Posterior cingulate gyrus (tissue), 11 donors: ENCODE measurements at regions of chr10 and their contacts with region 1.

Region 1: GRCh38 chr10:70478191-70479164 is at the start of gene PALD1:
- DNase-seq: peak in 8 of 10 donors; percentile 24 to 92 (median 48)

Region 2: DNA sequence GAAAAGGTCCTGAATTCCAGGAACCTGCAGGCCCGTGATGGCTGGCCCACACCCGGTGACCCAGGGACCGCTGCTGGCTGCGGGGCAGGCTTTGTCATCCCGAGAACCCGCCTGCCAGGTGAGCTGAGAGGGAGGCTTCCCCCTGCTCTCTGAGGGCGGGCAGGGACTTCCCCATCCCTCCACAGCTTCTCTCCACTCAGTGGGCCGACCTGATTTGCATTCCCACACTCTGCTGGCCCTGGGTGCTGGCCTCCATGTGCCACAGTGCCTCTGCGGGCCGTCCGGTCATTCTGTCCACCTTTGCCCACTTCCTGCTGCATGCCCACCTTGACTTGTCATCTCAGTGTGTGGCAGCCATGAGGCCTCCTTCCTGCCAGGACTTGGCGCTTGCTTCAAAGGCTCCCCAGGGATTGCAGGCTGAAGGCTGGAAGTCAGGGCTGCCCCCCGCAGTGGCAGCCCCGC is 35.4 kb after region 1 on chr10:
- intact Hi-C with region 1: loop called (anchors 5 kb)
- DNase-seq: no peak

Region 3: DNA sequence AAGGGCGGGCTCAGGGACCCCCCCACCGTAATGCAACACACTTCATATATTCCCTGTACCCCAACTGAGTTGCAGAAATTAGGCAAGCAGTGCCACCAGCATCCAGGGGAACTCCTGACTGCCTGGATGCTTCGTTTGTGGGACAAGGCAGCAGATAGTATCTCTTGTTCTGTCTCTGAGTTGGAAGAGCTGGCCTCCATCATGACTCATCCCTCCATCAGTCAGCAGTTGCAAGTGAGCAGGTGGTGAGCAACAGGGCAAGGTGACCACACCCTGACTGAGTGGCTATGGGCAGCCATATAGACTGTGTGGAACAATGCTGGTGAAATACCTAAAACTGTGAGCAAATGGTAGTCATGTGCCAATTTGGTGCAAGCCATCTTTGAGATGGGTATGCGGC is 171.0 kb after region 1 on chr10:
- intact Hi-C with region 1: no loop called
- DNase-seq: no peak

Region 4: GRCh38 chr10:71001470-71001869 is 523.0 kb after region 1 on chr10:
- intact Hi-C with region 1: no loop called
- DNase-seq: no peak